MCF 10A (cell line): ENCODE measurements at regions of chr14 and their contacts with region 1.

Region 1: GRCh38 chr14:85856430-85856829 is 326.5 kb downstream of the FLRT2 start:
- DNase-seq: no peak
- H3K4me3 Mint-ChIP-seq: no peak overlapping the region
- H3K27ac Mint-ChIP-seq: no peak overlapping the region
- H3K4me1 Mint-ChIP-seq: peaks cover 9% of the 10 kb centered on the region
- H3K27me3 Mint-ChIP-seq: no peaks in the 10 kb centered on the region
- CTCF ChIP-seq: peak; percentile 35

Region 2: GRCh38 chr14:85617791-85618190 is 238.6 kb before region 1 on chr14:
- CTCF ChIA-PET with region 1: interaction called, 4 read pairs
- POLR2A ChIA-PET with region 1: no interaction called
- intact Hi-C with region 1: loop called (anchors 10 kb)
- DNase-seq: no peak
- H3K4me3 Mint-ChIP-seq: no peak overlapping the region
- H3K27ac Mint-ChIP-seq: no peak overlapping the region
- H3K4me1 Mint-ChIP-seq: no peaks in the 10 kb centered on the region
- H3K27me3 Mint-ChIP-seq: no peaks in the 10 kb centered on the region
- CTCF ChIP-seq: no peak

Region 3: DNA sequence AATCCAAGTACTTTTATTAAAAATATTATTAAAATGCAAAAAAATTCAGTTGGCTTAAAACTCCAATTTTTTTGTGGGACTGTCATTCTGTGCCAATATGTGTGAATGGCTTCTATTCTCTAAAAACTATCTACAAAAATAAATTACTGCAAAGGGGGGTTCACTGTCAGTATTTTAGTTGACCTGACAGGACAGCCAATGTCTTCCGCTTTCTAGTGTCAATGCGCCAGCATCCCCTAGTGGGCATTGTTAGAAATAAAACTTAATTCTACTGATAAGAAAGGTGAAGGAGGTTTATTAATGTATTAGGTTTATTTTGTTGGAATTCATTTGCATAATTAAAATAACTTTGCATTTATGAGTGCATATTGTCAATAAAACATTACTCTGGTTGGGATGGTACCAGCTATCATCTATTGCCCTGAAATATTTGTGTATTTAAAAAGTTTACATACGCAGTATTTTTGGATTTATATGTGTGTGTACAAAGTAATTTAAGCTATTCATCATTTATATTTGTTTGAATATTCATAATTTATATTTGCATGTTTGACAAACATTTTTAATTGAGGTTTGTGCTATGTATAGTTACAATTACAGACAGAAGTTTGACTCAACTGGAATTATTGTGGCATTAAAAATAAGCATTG is 200.7 kb after region 1 on chr14:
- CTCF ChIA-PET with region 1: interaction called, 3 read pairs
- POLR2A ChIA-PET with region 1: no interaction called
- intact Hi-C with region 1: loop called (anchors 5 kb)
- DNase-seq: peak; percentile 55
- H3K4me3 Mint-ChIP-seq: no peak overlapping the region
- H3K27ac Mint-ChIP-seq: no peak overlapping the region
- H3K4me1 Mint-ChIP-seq: no peaks in the 10 kb centered on the region
- H3K27me3 Mint-ChIP-seq: no peaks in the 10 kb centered on the region
- CTCF ChIP-seq: peak; percentile 75